ENCODE measurements at regions of chr16 and their contacts with region 1.

Region 1: DNA sequence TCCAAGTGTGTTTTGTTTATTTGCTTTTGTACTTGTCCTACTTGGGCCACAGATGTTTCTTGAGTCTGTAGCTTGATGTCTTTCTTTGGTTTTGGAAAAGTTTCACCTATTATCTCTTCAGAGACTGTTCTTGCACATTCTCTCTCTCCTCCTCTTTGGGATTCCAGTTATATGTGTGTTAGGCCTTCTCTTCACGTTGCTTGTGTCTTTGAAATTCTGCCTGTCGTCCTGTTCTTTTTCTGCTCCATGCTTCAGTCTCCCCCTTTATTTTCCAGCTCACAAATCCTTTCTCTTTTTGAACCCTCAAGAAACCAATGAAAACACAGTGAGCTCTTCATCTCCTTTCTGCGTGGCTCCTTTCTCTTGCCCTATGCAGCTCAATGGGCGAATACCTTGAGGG is 7.9 kb downstream of the VPS35L start:
- DNase-seq: no peak
- H3K4me3 ChIP-seq: no peak overlapping the region
- CTCF ChIP-seq: no peak

Region 2: DNA sequence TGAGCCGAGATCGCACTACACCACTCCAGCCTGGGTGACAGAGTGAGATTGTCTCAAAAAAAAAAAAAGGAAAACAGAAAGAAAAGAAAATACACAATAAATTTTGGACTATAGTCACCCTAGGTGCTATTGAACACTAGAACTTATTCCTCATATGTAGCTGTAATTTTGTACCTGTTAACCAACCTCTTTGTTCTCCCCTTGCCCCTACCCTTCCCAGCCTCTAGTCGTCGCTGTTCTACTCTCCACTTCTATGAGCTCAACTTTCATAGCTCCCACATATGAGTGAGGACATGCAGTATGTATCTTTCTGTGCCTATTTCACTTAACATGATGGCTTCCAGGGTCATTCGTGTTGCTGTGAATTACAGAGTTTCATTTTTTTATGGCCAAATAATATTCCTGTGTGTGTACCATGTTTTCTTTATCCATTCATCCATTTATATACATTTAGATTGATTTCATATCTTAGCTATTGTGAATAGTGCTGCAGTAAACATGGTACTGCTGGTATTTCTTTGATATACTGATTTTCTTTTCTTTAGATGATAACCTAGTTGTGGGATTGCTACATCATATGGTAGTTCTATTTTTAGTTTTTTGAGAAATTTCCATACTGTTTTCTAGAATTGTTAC is 20.4 kb after region 1 on chr16:
- CTCF ChIA-PET with region 1: interaction called, 24 read pairs
- POLR2A ChIA-PET with region 1: no interaction called
- DNase-seq: no peak
- H3K4me3 ChIP-seq: no peak overlapping the region
- CTCF ChIP-seq: peak; percentile 82